GM10248 (cell line): ENCODE measurements at regions of chr20 and their contacts with region 1.

Region 1: GRCh38 chr20:45293041-45294002 is 13.3 kb upstream of the RBPJL start:
- DNase-seq: peak; percentile 83
- CTCF ChIP-seq: peak; percentile 90

Region 2: DNA sequence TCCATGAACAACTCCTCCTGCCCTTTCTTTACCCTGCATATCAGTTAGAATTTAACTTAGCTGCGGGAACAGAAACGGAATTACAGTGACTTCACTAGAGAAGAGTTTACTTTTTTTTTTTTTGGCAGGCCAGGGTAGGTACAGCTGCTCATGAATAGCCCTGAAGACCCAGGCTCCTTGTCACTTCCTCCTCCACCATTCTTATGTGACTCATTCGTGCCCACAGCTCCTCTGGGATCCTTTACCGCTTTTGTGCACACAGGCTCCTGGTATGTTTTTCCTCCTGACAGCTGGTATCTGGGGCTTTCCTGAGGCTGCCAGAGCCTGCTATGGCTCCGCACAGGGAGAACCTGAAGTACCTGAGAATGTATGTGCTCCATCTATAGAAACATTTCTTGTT is 188.5 kb before region 1 on chr20:
- CTCF ChIA-PET with region 1: interaction called, 70 read pairs
- POLR2A ChIA-PET with region 1: no interaction called
- DNase-seq: no peak
- CTCF ChIP-seq: no peak

Region 3: DNA sequence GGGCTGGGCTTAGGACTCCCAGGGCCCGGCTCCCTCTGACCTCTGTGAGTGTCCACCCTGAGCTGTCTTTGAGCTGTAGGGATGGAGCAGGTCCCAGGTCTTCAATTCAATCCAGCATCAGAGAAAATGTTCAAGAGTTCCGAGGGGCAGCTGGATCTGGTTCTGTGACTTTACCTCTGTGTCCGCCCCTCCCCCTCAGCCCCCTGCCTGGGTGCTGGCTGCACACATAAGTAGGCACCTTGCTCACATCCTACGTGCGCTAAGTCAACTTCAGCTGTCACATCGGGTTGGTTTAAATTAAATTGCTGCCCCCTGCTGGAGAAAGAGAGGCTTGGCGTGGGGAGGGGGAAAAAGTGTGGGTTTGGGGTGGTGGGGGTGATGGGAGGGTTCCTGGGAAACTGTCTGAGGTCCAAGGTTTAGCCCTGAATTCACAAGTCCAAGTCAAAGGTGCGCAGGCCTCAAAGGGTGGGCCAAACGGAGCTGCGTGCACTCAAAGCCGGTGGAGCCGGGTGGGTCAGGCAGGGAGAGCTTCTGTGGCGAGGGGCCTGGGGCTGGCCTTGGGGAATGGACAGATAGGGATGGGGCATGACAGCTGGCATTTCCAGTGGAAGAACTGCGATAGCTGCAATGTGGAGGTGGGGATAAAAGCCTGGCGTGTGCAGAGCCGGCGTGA is 181.4 kb before region 1 on chr20:
- CTCF ChIA-PET with region 1: interaction called, 46 read pairs
- POLR2A ChIA-PET with region 1: no interaction called
- DNase-seq: no peak
- CTCF ChIP-seq: peak; percentile 47

Region 4: GRCh38 chr20:45138561-45139300 is 154.6 kb before region 1 on chr20:
- CTCF ChIA-PET with region 1: interaction called, 24 read pairs
- POLR2A ChIA-PET with region 1: no interaction called
- DNase-seq: peak; percentile 46
- CTCF ChIP-seq: peak; percentile 50

Region 5: DNA sequence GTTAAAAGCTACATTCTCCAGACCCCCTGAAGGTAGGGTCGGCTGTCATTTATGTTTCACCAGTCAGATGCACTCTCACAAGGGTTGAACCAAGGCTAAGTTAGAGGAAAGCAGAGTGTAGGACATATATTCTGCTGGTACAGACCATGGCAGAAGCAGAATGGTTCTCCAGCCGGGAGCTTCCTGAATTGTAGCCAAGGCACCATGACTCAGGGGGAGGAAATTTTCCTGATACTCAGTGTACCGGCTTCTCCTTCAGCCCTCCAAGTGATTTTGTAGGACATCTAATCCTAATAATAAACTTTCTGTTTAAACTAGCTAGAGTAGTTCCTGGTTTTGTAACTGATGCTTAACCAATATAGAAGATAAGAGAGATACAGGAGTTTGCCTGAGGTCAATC is 24.8 kb before region 1 on chr20:
- CTCF ChIA-PET with region 1: interaction called, 34 read pairs
- POLR2A ChIA-PET with region 1: no interaction called
- DNase-seq: no peak
- CTCF ChIP-seq: no peak

Region 6: GRCh38 chr20:45311589-45312211 is 18.4 kb after region 1 on chr20:
- CTCF ChIA-PET with region 1: interaction called, 19 read pairs
- POLR2A ChIA-PET with region 1: no interaction called
- DNase-seq: peak; percentile 81
- CTCF ChIP-seq: peak; percentile 79

Region 7: DNA sequence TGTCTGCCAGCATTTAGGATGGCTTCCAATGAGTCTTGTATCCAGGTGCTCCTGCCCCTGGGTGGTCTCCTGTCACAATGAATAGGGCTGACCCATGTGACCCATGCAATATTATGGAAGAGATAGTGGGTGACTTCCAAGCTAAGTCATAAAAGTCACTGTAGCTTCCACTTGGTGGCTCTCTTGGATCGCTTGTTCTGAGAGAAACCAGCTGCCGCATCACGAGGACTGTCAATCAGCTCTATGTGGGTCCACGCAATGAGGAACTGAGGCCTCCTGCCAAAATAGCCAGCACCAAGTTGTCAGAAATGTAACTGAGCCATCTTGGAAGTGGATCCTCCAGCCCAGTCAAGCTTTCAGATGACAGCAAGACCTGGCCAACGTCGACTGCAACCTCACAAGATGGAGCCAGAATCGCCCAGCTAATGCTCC is 29.6 kb after region 1 on chr20:
- CTCF ChIA-PET with region 1: interaction called, 71 read pairs
- POLR2A ChIA-PET with region 1: no interaction called
- DNase-seq: peak; percentile 63
- CTCF ChIP-seq: peak; percentile 15